ENCODE measurements at regions of chr2 and their contacts with region 1.

Region 1: DNA sequence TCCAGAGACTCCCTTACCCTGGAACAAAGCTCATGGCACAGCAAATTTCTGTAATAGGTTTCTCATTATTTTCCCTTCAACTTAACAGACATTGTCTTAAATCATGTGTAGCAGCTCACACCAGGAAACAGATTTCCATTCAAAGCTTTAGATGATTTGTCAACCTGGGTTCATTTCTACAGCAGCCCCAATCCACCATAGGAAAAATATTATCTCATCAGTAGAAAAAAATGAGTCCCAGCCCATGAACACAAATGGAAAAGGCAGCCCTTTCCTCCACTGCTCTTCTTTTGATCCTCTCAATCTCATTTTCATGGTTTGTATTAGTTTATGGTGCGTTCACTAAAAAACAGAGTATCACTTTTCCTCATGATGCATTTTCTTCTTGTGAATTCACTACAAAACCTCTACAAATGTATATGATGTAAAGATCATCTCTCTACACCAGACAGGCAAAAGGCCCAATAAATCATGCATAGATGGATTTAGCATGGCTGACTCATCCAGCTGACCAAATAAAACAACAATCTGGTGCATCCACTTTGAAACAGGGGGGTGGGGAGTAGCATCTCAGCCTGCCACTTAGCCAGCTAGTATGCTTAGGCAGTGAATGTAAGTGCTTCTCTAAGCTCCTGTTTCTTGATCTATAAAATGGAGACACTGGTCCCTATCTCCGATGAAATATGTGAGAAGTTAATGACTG is 78.6 kb downstream of the SATB2 start:
- DNase-seq: no peak
- H3K4me3 ChIP-seq: no peak overlapping the region
- H3K27ac ChIP-seq: no peak overlapping the region
- H3K4me1 ChIP-seq: peaks cover 0 to 12% (median 4%) of the 10 kb centered on the region in 4 donors
- H3K27me3 ChIP-seq: no peaks in the 10 kb centered on the region
- CTCF ChIP-seq: no peak
- EP300 ChIP-seq: no peak
- POLR2A ChIP-seq: no peak

Region 2: GRCh38 chr2:199409759-199410529 is 30.8 kb after region 1 on chr2:
- in situ Hi-C with region 1: no loop called
- intact Hi-C with region 1: loop called (anchors 1 kb)
- DNase-seq: no peak
- H3K4me3 ChIP-seq: no peak overlapping the region
- H3K27ac ChIP-seq: no peak overlapping the region
- H3K4me1 ChIP-seq: peaks cover 0 to 38% (median 16%) of the 10 kb centered on the region in 4 donors
- H3K27me3 ChIP-seq: no peaks in the 10 kb centered on the region
- CTCF ChIP-seq: no peak
- EP300 ChIP-seq: no peak
- POLR2A ChIP-seq: no peak

Region 3: DNA sequence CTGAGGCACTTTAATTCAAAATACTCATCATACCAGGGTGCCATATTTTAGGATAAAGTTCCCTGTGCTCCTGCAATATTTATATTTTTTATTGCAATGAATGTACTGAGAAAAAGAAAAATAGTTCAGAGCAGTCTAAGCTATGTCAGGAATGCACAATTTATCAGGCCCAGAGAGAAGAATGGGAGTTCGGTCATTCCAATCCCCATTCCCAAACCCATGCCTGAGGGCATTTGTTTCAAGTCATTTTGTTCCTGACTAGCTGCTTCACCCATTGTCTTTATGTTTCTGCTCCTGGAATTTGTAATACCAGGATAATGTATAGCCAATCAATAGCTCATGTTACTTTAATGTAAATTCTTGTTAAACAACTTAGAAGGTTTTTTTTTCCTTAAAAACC is 496.3 kb after region 1 on chr2:
- in situ Hi-C with region 1: no loop called
- intact Hi-C with region 1: no loop called
- DNase-seq: no peak
- H3K4me3 ChIP-seq: no peak overlapping the region
- H3K27ac ChIP-seq: no peak overlapping the region
- H3K4me1 ChIP-seq: peaks cover 0 to 2% (median 0%) of the 10 kb centered on the region in 4 donors
- H3K27me3 ChIP-seq: no peaks in the 10 kb centered on the region
- CTCF ChIP-seq: no peak
- EP300 ChIP-seq: no peak
- POLR2A ChIP-seq: no peak